ENCODE measurements at regions of chr20 and their contacts with region 1.

Region 1: GRCh38 chr20:44990425-44990824 is 24.1 kb downstream of the STK4 start:
- DNase-seq: no peak
- ATAC-seq: peak; percentile 80
- H3K4me3 ChIP-seq: peak overlapping the region; percentile 51; the same call in 1 of the 2 replicates
- H3K27ac ChIP-seq: peak overlapping the region; percentile 69
- H3K4me1 ChIP-seq: peaks cover 5% of the 10 kb centered on the region; the same call in 1 of the 2 replicates
- H3K27me3 ChIP-seq: no peaks in the 10 kb centered on the region
- CTCF ChIP-seq: no peak
- EP300 ChIP-seq: no peak
- POLR2A ChIP-seq: no peak
- RAD21 ChIP-seq: no peak

Region 2: DNA sequence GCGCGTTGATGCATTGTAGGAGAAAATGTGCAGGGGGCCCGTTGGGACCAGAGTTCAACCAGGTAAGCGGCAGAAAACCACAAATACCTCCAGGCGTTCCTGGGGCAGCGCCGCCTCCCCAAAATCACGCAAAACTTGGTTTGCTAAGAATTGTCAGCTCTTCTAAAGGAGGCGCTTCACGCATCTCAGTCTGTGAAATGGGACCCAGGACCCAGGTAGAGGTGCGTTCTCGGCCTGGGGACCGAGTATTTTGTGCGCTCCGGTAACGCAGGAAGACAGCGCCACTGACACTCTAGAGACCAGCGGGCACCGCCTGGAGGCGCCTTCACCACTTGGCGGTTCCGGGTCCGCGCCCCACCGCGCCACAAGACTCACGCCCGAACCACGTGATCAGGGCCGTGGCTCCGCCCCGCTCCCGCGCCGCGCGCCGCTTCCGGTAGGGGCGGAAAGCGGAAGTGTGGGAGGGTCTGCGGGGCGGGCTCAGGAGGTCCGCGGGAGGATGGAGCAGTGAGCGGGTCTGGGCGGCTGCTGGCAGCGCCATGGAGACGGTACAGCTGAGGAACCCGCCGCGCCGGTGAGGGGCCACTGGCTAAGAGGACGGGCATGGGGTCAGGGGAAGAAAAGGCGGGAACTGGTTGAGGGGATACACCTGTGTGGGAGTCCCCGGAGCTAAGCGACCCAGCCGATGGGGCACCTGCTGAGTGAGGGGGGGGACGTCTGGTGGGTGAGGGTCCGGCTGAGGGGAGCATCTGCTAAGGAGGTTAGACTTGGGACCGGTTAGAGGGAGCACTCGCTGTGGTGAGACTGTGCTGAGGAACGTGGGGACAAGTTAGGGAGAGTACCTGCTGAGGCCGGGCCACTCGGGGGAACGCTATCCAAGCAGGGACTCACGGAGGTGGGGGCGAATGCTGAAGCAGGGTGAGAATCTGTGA is 24.1 kb before region 1 on chr20 and contains the start of gene STK4:
- CTCF ChIA-PET with region 1: interaction called, 6 read pairs
- POLR2A ChIA-PET with region 1: interaction called, 3 read pairs
- RAD21 ChIA-PET with region 1: interaction called, 14 read pairs
- SMC1A ChIA-PET with region 1: interaction called, 8 read pairs
- in situ Hi-C with region 1: no loop called
- intact Hi-C with region 1: no loop called
- DNase-seq: peak; percentile 90
- ATAC-seq: peak; percentile 79
- H3K4me3 ChIP-seq: peak within 1 kb of the TSS; percentile 95
- H3K27ac ChIP-seq: peak within 1 kb of the TSS; percentile 95
- H3K4me1 ChIP-seq: peaks cover 13% of the 10 kb centered on the region
- H3K27me3 ChIP-seq: no peaks in the 10 kb centered on the region
- CTCF ChIP-seq: peak; percentile 50 to 74 (median 59)
- EP300 ChIP-seq: no peak; a peak in 1 of 4 replicates
- POLR2A ChIP-seq: peak; percentile 95
- RAD21 ChIP-seq: peak; percentile 45
- polyA plus RNA-seq, gene STK4: 24.0 to 51.4 TPM

Region 3: GRCh38 chr20:44979090-44979621 is 11.3 kb before region 1 on chr20:
- CTCF ChIA-PET with region 1: interaction called, 6 read pairs
- POLR2A ChIA-PET with region 1: interaction called, 6 read pairs
- RAD21 ChIA-PET with region 1: interaction called, 8 read pairs
- SMC1A ChIA-PET with region 1: interaction called, 24 read pairs
- in situ Hi-C with region 1: no loop called
- intact Hi-C with region 1: no loop called
- DNase-seq: peak; percentile 82
- ATAC-seq: peak; percentile 95
- H3K4me3 ChIP-seq: 0 out of 2 replicates have a peak overlapping the region, but pooled peaks have one; percentile 27
- H3K27ac ChIP-seq: peak overlapping the region; percentile 89
- H3K4me1 ChIP-seq: peaks cover 17% of the 10 kb centered on the region
- H3K27me3 ChIP-seq: no peaks in the 10 kb centered on the region
- CTCF ChIP-seq: no peak
- EP300 ChIP-seq: peak; percentile 65 to 66; a peak in 3 of 4 replicates
- POLR2A ChIP-seq: no peak
- RAD21 ChIP-seq: no peak

Region 4: DNA sequence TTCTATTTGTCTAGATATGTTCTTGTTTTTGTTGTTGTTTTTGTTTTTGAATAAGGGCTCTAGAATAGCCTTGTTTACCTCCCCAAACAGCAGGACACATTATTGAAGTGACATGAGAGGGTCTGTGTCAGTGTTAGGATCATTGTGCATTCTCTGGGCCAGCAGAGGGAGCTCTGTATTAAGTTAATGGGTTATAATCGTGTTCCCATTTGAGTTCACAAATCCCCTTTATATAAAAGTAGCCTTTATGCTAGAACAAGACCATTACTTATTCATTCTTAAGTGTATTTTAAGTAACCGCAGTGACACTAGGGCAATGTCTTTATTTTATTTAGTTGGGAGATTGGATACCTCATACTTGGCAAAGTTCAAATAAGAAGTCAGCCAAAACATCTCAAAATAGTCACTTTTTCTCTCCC is 20.7 kb after region 1 on chr20:
- CTCF ChIA-PET with region 1: interaction called, 12 read pairs
- POLR2A ChIA-PET with region 1: interaction called, 4 read pairs
- RAD21 ChIA-PET with region 1: interaction called, 4 read pairs
- SMC1A ChIA-PET with region 1: interaction called, 4 read pairs
- in situ Hi-C with region 1: no loop called
- intact Hi-C with region 1: no loop called
- DNase-seq: no peak
- ATAC-seq: peak; percentile 79
- H3K4me3 ChIP-seq: no peak overlapping the region
- H3K27ac ChIP-seq: no peak overlapping the region
- H3K4me1 ChIP-seq: no peaks in the 10 kb centered on the region
- H3K27me3 ChIP-seq: no peaks in the 10 kb centered on the region
- CTCF ChIP-seq: peak; percentile 55 to 64 (median 61)
- EP300 ChIP-seq: no peak
- POLR2A ChIP-seq: no peak
- RAD21 ChIP-seq: peak; percentile 67

Measured in GM12878 (cell line).